IMR-90 (cell line): ENCODE measurements at regions of chr3 and their contacts with region 1.

Region 1: DNA sequence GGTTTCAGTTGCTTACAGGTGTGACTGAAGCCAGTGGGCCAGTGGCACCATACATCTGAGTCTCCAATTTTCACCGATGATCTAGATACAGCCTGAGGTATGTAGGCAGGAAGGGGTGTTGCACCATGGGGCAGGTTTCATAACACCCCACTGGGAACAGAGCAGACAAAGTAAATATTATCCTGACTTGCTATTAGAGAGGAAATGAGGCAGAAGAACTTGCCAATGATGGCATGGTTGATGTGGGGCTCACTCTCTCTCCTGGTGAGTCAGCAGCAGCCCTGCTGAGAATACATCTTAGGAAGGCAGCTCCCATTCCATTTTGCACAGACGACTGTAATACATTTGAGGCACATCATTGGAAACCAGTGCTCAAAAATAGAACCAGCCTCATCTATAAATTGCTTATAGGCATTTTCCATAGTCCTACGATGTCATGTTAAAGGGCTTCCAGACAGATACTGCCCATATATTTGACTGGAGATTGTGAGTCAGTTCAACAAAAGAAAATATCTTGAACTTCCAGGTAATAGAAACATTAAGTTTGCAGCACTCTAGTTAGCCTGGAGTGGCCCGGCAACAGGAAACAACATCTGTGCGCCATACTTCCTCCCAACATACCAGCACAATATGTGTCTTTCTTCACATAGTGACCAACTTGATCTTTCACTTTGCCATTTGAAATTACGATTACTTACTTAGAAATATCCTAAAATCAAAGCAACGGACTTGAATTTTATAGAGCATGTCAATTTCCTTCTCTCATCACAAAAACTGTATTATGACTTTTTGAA is 175.5 kb downstream of the NECTIN3 start:
- DNase-seq: peak; percentile 91
- ATAC-seq: peak; percentile 88
- H3K4me3 ChIP-seq: no peak overlapping the region
- H3K27ac ChIP-seq: no peak overlapping the region
- H3K4me1 ChIP-seq: peaks cover 2% of the 10 kb centered on the region; the same call in 1 of the 2 replicates
- H3K27me3 ChIP-seq: no peaks in the 10 kb centered on the region
- CTCF ChIP-seq: no peak
- POLR2A ChIP-seq: no peak
- RAD21 ChIP-seq: no peak

Region 2: DNA sequence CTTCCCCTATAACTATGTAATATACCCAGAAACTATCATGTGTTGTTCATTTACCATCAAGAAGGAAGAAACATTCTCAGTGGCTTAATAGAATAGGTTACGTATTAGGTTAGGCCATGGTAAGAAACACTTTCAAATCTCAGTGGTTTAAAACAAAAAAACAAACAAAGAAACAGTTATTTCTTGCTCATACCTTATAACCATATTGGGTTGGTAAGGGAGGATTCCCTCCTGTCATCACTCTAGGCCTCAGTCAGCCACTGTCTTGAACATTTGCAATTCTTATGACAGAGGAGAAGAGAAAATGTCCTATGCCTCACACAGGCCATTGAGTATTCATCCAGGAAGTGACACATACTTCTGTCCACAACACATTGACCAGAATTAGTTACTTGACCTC is 903.2 kb before region 1 on chr3:
- CTCF ChIA-PET with region 1: no interaction called
- POLR2A ChIA-PET with region 1: no interaction called
- dilution Hi-C with region 1: no loop called
- in situ Hi-C with region 1: no loop called
- intact Hi-C with region 1: no loop called
- DNase-seq: peak; percentile 33
- ATAC-seq: no peak
- H3K4me3 ChIP-seq: no peak overlapping the region
- H3K27ac ChIP-seq: no peak overlapping the region
- H3K4me1 ChIP-seq: peaks cover 6% of the 10 kb centered on the region; the same call in 1 of the 2 replicates
- H3K27me3 ChIP-seq: no peaks in the 10 kb centered on the region
- CTCF ChIP-seq: no peak
- POLR2A ChIP-seq: no peak
- RAD21 ChIP-seq: no peak

Region 3: GRCh38 chr3:111315925-111316587 is 68.9 kb after region 1 on chr3:
- CTCF ChIA-PET with region 1: no interaction called
- POLR2A ChIA-PET with region 1: no interaction called
- dilution Hi-C with region 1: no loop called
- in situ Hi-C with region 1: no loop called
- intact Hi-C with region 1: loop called (anchors 5 kb)
- DNase-seq: peak; percentile 93
- ATAC-seq: peak; percentile 85
- H3K4me3 ChIP-seq: no peak overlapping the region
- H3K27ac ChIP-seq: no peak overlapping the region
- H3K4me1 ChIP-seq: peaks cover 8% of the 10 kb centered on the region
- H3K27me3 ChIP-seq: no peaks in the 10 kb centered on the region
- CTCF ChIP-seq: no peak
- POLR2A ChIP-seq: no peak
- RAD21 ChIP-seq: no peak